ENCODE measurements at regions of chr17 and their contacts with region 1.

Region 1: GRCh38 chr17:50853015-50853615 is 13.0 kb downstream of the TOB1 start:
- DNase-seq: no peak
- ATAC-seq: peak; percentile 13

Region 2: GRCh38 chr17:50893183-50893993 is 40.3 kb after region 1 on chr17:
- intact Hi-C with region 1: no loop called
- DNase-seq: peak; percentile 35
- ATAC-seq: peak; percentile 42

Region 3: DNA sequence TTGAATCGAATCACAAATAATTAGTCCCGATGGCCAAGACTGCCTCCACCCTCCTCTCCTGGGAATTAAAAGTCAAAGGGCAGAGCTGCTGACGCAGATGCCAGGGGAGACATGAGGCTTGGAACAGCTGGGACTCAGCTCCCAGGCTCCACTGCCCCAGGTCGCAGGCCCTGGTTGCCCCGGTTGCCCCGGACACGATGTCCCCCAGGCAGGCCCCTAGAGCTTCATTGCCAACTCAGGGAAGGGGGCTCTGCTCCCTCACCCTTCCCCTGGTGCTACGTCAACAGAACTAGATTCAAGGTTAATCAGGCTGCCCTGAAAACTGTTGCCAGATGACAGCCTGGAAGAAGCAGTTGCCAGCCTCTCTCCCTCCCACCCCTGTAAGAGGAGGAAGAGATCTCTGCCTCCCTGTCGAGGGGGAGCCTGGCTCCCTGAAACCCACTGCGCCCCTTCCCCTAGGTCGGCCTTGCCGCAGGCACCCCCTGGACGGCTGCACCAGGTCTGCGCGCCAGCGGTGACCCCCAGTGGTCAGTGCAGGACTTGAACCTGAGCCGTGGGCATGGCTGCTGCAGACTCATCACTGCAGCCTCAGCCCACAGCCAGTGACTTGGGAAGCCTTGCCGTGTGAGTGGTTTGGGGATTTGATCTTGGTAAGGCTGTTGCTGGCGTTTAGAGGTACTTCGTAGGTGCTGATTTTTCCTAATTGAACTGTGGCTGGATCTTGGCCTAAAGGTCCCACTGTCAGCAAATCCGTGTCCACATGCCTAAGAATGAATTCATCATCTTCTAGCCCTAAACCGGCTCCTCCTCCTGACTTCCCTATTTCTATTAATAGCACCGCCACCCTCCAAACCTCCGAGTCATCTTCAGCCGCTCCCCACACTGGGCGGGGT is 97.1 kb after region 1 on chr17:
- intact Hi-C with region 1: loop called (anchors 2 kb)
- DNase-seq: peak; percentile 84
- ATAC-seq: peak; percentile 85

Measured in Right ventricle myocardium superior (tissue), 1 donor.